ENCODE measurements at regions of chr21 and their contacts with region 1.

Region 1: DNA sequence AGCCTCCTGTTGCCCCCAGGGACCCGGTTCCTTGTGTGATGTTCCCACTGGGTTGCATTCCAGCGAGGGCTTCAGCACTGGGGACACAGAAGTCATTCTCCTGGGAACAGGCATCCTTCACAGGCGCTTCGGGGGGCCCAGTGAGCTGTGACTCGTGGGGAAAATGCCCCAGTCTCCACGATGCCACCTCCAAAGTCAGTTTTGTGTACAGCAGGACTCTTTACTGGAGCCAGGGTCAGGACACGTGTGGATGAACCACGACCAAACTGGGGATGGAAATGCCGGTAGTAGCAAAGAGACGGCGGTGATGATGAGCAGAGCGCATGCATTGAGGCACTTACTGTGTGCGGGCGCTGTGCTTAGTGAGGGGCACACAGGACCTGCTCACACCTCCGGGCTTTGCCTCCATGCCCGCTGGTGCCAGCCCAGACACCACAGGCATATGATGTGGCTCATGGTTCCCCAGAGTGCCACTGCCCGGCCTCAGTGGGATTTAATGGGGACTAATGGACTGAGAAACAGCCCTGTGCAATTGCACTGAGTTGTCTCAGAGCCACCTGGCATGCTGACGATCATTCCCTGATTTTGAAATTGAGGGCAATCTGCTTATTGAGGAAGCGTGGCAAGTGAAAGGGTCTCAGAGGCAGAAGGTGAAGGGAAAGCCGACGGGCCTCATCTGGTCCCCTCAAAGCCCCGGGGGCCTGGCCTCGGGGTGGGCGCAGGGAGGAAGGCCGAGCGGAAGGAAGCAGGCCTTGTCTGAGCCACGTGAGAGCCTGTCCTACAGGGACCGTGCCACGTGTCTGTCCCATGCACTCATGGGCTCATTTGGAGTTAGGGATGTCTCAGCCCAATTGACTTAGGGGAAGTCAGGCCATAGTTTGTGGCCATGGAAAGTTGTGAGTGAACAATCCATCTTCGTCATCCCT is 91.4 kb downstream of the PDE9A start:
- DNase-seq: peak; percentile 58
- H3K4me3 ChIP-seq: no peak overlapping the region
- H3K27ac ChIP-seq: peak overlapping the region in 3 of 4 donors; percentile 79 to 84 (median 84)
- H3K4me1 ChIP-seq: peaks cover 0 to 63% (median 47%) of the 10 kb centered on the region in 4 donors
- H3K27me3 ChIP-seq: no peaks in the 10 kb centered on the region
- CTCF ChIP-seq: no peak
- EP300 ChIP-seq: no peak
- POLR2A ChIP-seq: no peak

Region 2: GRCh38 chr21:42474982-42475381 is 269.8 kb before region 1 on chr21:
- intact Hi-C with region 1: no loop called
- DNase-seq: no peak
- H3K4me3 ChIP-seq: no peak overlapping the region
- H3K27ac ChIP-seq: no peak overlapping the region
- H3K4me1 ChIP-seq: no peaks in the 10 kb centered on the region
- H3K27me3 ChIP-seq: peaks cover 0 to 8% (median 0%) of the 10 kb centered on the region in 3 donors
- CTCF ChIP-seq: no peak
- EP300 ChIP-seq: no peak
- POLR2A ChIP-seq: no peak

Region 3: DNA sequence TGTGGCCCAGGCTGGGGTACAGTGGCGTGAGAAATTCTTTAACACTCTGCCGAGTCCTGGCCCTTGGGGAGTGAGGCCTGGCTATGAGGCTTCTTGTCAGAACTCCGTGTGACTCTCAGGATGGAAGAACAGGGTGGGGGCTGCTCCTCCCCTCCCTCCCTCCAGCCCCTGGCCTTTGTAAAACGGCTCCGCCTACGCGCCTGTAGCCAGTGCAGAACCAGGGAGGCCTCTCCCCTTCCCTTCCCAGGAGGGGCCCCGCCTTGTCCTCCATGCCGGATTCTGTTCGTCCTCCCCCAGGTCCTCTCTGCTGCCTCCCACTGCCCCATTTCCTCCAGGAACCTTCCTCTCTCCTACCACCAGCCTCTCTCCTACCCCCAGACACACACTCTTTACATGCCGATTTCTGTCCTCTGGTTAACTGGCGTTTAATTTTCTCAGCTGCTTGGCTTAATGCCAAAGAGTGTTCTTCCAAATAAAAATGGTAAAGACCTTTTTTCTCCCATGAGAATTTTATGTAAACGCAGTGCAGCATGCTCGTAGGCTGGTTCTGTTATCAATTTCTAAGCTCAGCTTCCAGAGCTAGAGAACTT is 70.3 kb before region 1 on chr21:
- intact Hi-C with region 1: loop called (anchors 5 kb)
- DNase-seq: peak; percentile 95
- H3K4me3 ChIP-seq: peak overlapping the region; percentile 8 to 32 (median 28)
- H3K27ac ChIP-seq: peak overlapping the region; percentile 71 to 85 (median 82)
- H3K4me1 ChIP-seq: peaks cover 0 to 81% (median 68%) of the 10 kb centered on the region in 4 donors
- H3K27me3 ChIP-seq: no peaks in the 10 kb centered on the region
- CTCF ChIP-seq: no peak
- EP300 ChIP-seq: no peak
- POLR2A ChIP-seq: no peak

Measured in sigmoid colon (tissue), 7 donors.